ENCODE measurements at regions of chr1 and their contacts with region 1.

Region 1: GRCh38 chr1:77950873-77951272 is 28.0 kb downstream of the FUBP1 start:
- DNase-seq: no peak
- ATAC-seq: no peak
- H3K4me3 ChIP-seq: no peak overlapping the region
- H3K27ac ChIP-seq: no peak overlapping the region
- H3K4me1 ChIP-seq: peaks cover 0 to 2% of the 10 kb centered on the region in 2 donors
- H3K27me3 ChIP-seq: no peaks in the 10 kb centered on the region

Region 2: DNA sequence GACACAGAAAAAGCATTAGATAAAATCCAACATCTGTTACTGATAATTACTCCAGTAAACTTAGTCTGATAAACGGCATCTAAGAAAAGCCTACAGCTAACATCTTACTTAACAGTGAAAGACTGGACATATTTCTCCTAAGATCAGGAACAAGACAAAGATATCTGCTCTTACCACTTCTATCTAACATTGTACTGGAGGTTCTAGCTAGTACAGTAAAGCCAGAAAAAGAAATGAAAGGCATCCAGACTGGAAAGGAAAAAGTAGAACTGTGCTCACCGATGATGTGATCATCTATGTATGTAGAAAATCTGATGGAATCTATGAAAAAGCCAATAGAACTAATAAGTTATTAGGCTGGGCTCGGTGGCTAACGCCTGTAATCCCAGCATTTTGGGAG is 40.8 kb before region 1 on chr1:
- intact Hi-C with region 1: loop called in 1 of 2 experiments (anchors 5 kb)
- DNase-seq: no peak
- ATAC-seq: no peak
- H3K4me3 ChIP-seq: no peak overlapping the region
- H3K27ac ChIP-seq: no peak overlapping the region
- H3K4me1 ChIP-seq: peaks cover 0 to 2% of the 10 kb centered on the region in 2 donors
- H3K27me3 ChIP-seq: no peaks in the 10 kb centered on the region

Region 3: DNA sequence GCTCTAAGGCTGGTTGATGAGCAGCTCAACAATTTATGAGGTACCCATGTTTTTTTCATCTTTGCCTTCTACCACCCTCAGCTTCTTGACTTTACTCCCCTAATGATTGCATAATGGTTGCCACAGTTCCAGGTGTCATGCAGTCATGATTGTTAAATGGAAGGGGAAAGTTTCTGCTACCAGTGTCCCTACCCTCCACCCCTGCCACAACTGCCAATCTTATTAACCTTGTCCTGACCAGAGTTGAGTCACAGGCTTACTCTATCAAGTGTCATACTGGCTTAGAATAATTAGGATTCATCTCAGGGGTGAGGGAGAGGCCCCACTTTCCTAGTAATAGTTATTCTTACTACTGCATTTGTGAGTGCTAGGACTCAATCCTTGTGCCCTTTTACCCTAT is 35.9 kb after region 1 on chr1:
- intact Hi-C with region 1: no loop called
- DNase-seq: no peak
- ATAC-seq: no peak
- H3K4me3 ChIP-seq: no peak overlapping the region
- H3K27ac ChIP-seq: no peak overlapping the region
- H3K4me1 ChIP-seq: no peaks in the 10 kb centered on the region
- H3K27me3 ChIP-seq: no peaks in the 10 kb centered on the region

Measured in aorta (tissue), 5 donors.